Breast epithelium (tissue), 4 donors: ENCODE measurements at regions of chr2 and their contacts with region 1.

Region 1: GRCh38 chr2:155815886-155816285 is 516.6 kb downstream of the NR4A2 start:
- DNase-seq: no peak
- H3K4me3 ChIP-seq: no peak overlapping the region
- H3K27ac ChIP-seq: no peak overlapping the region
- H3K4me1 ChIP-seq: no peaks in the 10 kb centered on the region
- H3K27me3 ChIP-seq: no peaks in the 10 kb centered on the region
- CTCF ChIP-seq: no peak
- POLR2A ChIP-seq: no peak

Region 2: DNA sequence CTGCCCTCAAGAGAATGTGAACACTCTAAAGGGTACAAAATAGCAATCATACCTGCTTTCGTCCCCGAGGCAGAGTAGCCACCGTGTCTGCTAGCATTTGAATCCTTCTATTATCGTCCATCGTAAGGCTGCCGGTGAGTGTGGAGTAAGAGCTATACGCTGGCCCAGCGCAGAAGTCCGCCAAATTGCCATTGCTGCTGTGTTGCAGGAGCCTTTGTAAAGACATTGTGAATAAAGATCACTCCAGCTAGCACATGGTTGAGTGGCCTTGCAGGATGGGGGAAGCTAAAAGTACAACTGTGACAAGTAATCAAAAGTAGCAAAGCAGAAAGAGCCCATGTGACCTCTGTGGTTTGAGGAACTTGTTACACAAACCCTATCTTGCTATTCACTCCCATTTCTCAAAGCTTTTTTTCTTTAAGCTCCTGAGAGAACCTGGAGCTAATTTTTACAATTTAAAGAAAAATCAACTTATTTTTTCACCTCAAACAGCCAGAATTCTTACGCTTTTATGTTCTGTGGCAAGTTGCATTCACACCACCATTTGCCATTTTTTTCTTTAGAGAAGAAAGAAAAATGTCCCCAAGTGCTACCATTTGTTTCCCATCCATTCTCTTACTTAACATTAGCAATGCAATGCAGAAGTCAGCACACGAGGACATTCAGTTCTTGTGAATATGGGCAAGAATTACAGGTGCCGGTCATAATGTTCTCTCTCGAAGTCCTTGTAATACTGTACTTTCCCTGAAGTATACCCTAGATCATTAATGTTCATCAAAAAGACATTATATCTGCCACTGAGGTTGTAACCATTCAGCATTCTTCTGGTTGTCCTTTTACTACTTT is 1628.1 kb after region 1 on chr2 and contains the start of gene CYTIP:
- intact Hi-C with region 1: loop called (anchors 5 kb)
- DNase-seq: peak in 1 of 2 donors; percentile 24
- H3K4me3 ChIP-seq: peak within 1 kb of the TSS; percentile 30 to 39 (median 36)
- H3K27ac ChIP-seq: no peak within 1 kb of the TSS
- H3K4me1 ChIP-seq: no peaks in the 10 kb centered on the region
- H3K27me3 ChIP-seq: no peaks in the 10 kb centered on the region
- CTCF ChIP-seq: no peak
- POLR2A ChIP-seq: no peak
- total RNA-seq, gene CYTIP: 11.5 to 18.7 (median 16.8) TPM